Activated T-helper 2 cell treated with anti-CD3 and anti-CD28 coated beads, Interferon-gamma antibody, Interleukin-2, Interleukin-4, amounts not matched to agents 10 μg/mL and 5 μg/mL and 100 μg/mL, durations not matched to agents 14 hours and 24 hours and 36 hours (primary cell): ENCODE measurements at regions of chr6 and their contacts with region 1.

Region 1: DNA sequence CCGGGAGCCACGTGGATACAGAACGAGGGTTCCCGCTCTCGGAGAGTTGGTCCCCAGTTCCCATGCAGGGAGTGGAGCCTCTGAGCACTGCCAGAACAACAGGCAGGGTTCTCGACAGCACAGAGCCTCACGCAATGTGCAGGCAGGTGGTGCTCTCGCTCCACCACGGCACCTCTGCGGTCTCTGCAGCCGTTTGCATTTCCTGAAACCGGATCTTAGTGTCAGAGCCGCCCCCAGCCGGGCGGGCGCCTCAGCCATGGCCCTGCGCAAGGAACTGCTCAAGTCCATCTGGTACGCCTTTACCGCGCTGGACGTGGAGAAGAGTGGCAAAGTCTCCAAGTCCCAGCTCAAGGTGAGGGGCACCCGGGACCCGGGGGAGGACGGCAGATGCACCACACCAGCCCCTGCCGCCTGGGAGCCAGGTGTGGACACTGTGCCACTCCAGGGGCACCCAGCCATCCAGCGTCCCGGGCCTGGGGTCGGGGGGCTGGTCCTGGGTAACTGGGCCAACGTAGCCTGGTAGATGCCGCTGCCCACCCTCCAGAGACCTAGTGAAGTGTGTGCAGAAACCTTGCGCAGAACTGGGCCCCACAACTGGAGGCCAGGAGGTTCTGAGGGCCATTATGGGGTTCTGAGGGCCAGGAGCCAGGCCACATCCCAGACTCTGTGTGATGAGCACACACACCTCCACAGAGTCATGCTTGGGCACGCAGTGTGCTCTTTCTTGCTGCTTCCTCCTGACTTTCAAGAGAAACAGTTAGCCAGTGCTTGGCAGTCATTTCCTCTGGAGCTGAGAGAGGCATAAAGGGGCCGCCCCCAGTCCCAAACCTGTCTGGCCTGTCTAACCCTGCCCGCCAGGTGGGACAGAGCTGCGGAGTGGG is at the start of gene DEF6:
- DNase-seq: peak; percentile 85
- H3K4me3 Mint-ChIP-seq: peak within 1 kb of the TSS; percentile 79
- H3K27ac Mint-ChIP-seq: peak within 1 kb of the TSS; percentile 87
- H3K4me1 Mint-ChIP-seq: peaks cover 38% of the 10 kb centered on the region
- H3K27me3 Mint-ChIP-seq: no peaks in the 10 kb centered on the region
- total RNA-seq, gene DEF6: 120 and 121 TPM in 2 replicates

Region 2: DNA sequence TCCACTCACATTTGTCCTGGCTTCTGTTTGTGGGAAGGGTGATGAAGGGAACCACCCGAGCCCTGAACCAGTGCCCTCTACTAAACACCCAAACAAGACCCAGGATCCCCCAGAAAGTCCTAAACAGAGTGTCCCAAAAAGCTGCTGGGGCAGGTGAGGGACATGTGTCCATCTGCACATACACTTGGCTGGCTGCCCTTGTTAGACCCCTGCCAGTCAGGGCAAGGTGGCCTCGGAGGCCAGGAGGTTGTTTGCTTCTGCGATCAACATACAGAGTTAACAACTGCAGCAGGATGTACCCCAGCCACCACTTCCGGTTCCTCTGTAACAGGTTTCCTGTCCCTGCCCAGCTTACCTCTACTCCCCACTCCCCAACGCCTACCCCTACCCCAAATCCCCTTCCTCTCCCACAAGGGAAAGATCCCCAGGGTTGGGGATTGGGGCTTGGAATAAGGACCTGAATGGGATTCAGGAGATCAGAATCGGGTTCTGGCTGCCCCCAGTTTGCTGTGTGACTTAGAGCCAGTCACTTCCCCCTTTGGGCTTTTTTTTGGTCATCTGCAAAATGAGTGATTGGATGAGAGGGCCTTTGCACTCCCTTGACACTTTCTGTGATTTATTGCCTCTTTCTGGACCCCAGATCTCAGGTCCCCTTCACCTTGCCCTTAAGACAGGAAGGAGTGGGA is 13.7 kb after region 1 on chr6:
- intact Hi-C with region 1: loop called (anchors 1 kb)
- DNase-seq: peak; percentile 54
- H3K4me3 Mint-ChIP-seq: peak overlapping the region; percentile 63
- H3K27ac Mint-ChIP-seq: peak overlapping the region; percentile 93
- H3K4me1 Mint-ChIP-seq: peaks cover 70% of the 10 kb centered on the region
- H3K27me3 Mint-ChIP-seq: no peaks in the 10 kb centered on the region

Region 3: DNA sequence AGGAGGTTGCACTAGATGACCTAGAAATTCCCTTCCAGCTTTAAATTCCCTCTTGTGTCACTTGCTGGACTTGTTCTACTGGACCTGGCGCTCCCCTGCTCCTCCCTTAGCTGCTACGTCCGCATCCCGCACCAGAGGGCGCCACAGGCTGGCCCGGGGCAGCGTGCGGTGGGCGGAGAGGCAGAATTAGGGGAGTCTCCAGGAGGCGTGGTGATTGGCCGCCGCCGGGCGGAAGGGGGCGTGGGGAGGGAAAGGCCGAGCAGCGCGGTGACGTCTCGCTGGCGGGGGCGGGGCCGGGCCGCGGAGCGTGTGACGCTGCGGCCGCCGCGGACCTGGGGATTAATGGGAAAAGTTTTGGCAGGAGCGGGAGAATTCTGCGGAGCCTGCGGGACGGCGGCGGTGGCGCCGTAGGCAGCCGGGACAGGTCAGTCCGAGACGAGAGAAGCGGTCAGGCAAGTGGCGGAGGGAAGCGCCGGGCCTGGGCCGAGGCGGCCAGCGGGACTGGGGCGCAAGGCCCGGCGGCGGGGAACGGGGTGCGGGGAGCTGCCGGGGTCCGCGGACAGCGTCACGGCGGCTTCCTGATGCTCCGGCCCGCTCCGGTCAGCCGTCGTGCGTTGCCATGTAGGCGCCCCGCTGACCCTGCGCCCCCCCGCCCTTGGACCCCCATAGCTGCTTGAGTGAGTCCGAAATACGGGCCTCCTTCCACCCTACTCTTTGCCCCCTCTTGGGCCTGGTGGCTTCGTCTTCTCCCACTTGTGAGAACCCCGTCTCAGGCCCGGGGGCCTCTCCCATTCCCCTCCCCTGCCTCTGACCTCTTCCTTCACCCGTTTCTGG is 44.6 kb after region 1 on chr6 and contains the start of gene PPARD:
- intact Hi-C with region 1: loop called (anchors 1 kb)
- DNase-seq: peak; percentile 96
- H3K4me3 Mint-ChIP-seq: peak within 1 kb of the TSS; percentile 98
- H3K27ac Mint-ChIP-seq: peak within 1 kb of the TSS; percentile 87
- H3K4me1 Mint-ChIP-seq: peaks cover 35% of the 10 kb centered on the region
- H3K27me3 Mint-ChIP-seq: no peaks in the 10 kb centered on the region
- total RNA-seq, gene PPARD: 27.1 and 29.1 TPM in 2 replicates

Region 4: DNA sequence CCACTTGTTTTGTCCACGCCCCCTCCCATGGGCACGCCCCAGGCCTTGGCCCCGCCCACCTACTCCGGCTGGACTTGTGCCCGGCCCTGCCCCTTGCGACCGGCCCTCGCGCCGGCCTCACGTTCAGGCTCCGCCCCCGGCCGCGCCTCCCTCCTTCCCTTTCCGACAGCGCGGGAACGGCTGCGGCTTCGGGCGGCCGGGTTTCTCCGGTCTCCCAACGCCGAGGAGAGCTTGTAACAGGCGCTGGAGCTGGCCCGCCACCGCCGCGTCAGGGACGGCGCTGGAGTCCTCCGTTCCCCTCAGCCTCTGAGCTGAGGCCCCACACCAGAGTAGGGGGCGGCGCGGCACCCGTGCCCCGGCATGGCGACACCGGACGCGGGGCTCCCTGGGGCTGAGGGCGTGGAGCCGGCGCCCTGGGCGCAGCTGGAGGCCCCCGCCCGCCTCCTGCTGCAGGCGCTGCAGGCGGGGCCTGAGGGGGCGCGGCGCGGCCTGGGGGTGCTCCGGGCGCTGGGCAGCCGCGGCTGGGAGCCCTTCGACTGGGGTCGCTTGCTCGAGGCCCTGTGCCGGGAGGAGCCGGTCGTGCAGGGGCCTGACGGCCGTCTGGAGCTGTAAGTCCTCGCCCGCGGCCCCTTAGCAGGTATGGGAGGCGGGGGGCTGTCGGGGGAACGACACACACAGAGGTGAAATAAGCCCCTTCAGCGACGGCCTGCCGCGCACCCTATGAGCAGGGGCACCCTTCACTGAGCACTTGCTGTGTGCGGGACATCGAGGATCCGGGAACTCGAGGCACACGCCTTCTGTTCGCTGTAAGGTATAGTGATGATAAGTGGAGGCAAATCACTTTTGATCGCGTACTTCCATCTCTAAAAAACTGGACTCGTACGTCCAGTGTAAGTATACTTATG is 154.6 kb after region 1 on chr6 and contains the start of gene FANCE:
- intact Hi-C with region 1: loop called (anchors 1 kb)
- DNase-seq: peak; percentile 91
- H3K4me3 Mint-ChIP-seq: peak within 1 kb of the TSS; percentile 84
- H3K27ac Mint-ChIP-seq: peak within 1 kb of the TSS; percentile 63
- H3K4me1 Mint-ChIP-seq: peaks cover 38% of the 10 kb centered on the region
- H3K27me3 Mint-ChIP-seq: peaks cover 10% of the 10 kb centered on the region
- total RNA-seq, gene FANCE: 20.6 and 21.1 TPM in 2 replicates

Region 5: GRCh38 chr6:35731736-35732532 is 434.1 kb after region 1 on chr6:
- intact Hi-C with region 1: loop called (anchors 5 kb)
- DNase-seq: peak; percentile 94
- H3K4me3 Mint-ChIP-seq: peak overlapping the region; percentile 82
- H3K27ac Mint-ChIP-seq: peak overlapping the region; percentile 86
- H3K4me1 Mint-ChIP-seq: peaks cover 55% of the 10 kb centered on the region
- H3K27me3 Mint-ChIP-seq: no peaks in the 10 kb centered on the region

Region 6: GRCh38 chr6:37102279-37103168 is 1804.7 kb after region 1 on chr6:
- intact Hi-C with region 1: no loop called
- DNase-seq: peak; percentile 67
- H3K4me3 Mint-ChIP-seq: peak overlapping the region; percentile 72
- H3K27ac Mint-ChIP-seq: peak overlapping the region; percentile 80
- H3K4me1 Mint-ChIP-seq: peaks cover 34% of the 10 kb centered on the region
- H3K27me3 Mint-ChIP-seq: no peaks in the 10 kb centered on the region